HepG2 (cell line): ENCODE measurements at regions of chr20 and their contacts with region 1.

Region 1: DNA sequence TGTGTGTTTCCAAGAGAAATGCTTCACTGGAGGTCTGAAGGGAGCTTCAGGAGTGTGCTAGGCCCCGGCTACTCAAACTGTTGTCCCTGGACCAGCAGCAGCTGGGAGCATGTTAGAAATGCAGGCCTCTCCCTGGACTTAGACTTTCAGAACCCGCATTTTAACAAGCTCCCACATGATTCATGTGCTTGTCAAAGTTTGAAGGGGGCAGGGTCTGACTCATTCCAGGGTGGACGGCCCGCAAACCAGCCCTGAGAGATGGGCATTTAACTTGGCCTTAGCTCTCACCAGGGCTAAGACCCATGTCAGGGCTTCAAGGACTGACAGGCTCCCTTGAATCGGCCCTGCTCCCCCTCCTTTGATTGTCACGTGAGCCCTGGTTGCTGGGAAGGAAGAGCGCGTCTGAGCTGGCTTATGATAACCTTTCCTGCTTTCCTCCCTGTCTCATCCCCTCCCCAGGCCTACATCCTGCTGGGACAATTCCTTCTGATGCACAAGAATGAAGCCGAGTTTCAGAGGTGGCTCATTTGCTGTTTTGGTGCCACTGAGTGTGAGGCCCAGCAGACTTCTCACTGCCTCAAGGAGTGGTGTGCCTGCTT is 35.5 kb downstream of the BANF2 start:
- DNase-seq: no peak
- ATAC-seq: peak; percentile 40
- H3K4me3 ChIP-seq: no peak overlapping the region
- H3K27ac ChIP-seq: no peak overlapping the region
- H3K4me1 ChIP-seq: peaks cover 25% of the 10 kb centered on the region
- H3K27me3 ChIP-seq: peaks cover 11 to 47% of the 10 kb centered on the region in 2 experiments; a peak in 4 of 5 replicates
- CTCF ChIP-seq: no peak
- EP300 ChIP-seq: no peak
- POLR2A ChIP-seq: no peak
- RAD21 ChIP-seq: no peak

Region 2: GRCh38 chr20:17024513-17025119 is 710.7 kb before region 1 on chr20:
- CTCF ChIA-PET with region 1: no interaction called
- POLR2A ChIA-PET with region 1: no interaction called
- in situ Hi-C with region 1: no loop called
- intact Hi-C with region 1: loop called (anchors 10 kb)
- DNase-seq: peak; percentile 84
- ATAC-seq: peak; percentile 69; the same call in 2 of the 3 replicates
- H3K4me3 ChIP-seq: no peak overlapping the region
- H3K27ac ChIP-seq: no peak overlapping the region
- H3K4me1 ChIP-seq: no peaks in the 10 kb centered on the region
- H3K27me3 ChIP-seq: no peaks in the 10 kb centered on the region
- CTCF ChIP-seq: no peak
- EP300 ChIP-seq: no peak
- POLR2A ChIP-seq: no peak
- RAD21 ChIP-seq: no peak